H1 (cell line): ENCODE measurements at regions of chr2 and their contacts with region 1.

Region 1: DNA sequence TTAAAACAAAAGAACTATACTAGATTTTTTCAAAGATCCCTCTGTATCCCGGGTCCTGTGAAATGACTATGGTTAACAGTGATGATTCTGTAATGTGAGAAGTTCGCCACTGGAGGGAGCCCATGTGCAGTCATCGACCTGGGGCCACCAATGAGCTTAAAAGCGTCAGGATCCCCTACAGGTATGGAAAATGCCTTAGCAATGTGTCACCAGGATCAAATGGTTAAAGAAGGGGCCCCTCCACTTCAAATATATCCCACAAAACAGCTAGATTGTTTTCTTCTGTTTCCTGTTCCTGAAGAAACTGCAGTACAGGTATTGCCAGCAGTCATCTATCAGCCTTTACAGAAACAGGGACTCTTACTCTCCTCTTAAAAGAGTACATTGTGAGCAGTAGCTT is 15.3 kb downstream of the CHRNA1 start:
- DNase-seq: peak; percentile 66 to 89
- H3K4me3 ChIP-seq: no peak overlapping the region; a peak in 1 of 8 replicates
- H3K27ac ChIP-seq: no peak overlapping the region
- H3K4me1 ChIP-seq: peaks cover 0 to 2% (median 1%) of the 10 kb centered on the region in 4 experiments; a peak in 3 of 7 replicates
- H3K27me3 ChIP-seq: no peaks in the 10 kb centered on the region
- CTCF ChIP-seq: peak; percentile 67 to 89 (median 82)
- EP300 ChIP-seq: no peak
- POLR2A ChIP-seq: no peak
- RAD21 ChIP-seq: peak; percentile 96 to 97

Region 2: DNA sequence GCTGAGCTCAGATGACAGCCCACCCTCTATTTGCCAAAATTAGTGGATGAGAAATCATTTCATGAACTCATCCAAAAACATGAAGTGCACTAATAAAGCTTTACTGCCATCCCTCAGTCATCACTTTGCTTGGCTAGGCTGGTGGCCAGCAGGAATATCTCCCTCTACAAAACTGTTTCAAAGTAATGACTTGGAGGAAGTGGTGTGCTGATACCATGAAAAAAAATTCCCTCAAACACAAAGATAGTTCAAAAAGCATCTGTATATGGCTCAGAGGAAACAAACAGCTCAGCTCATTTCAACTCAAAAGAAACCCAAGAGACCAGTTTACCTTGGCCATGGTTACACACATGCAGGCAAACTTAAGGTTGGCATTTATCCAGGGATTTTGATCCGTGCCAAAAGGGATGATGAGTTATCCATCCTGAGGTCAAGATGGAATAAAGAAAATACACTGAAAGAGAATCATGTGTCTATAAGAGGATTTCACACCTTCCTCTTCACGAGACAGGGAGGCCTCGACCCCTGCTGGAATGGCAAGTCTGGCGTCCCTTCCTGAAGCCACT is 133.0 kb before region 1 on chr2:
- CTCF ChIA-PET with region 1: no interaction called
- POLR2A ChIA-PET with region 1: no interaction called
- DNase-seq: no peak
- H3K4me3 ChIP-seq: no peak overlapping the region
- H3K27ac ChIP-seq: no peak overlapping the region
- H3K4me1 ChIP-seq: no peaks in the 10 kb centered on the region
- H3K27me3 ChIP-seq: no peaks in the 10 kb centered on the region
- CTCF ChIP-seq: no peak
- EP300 ChIP-seq: no peak
- POLR2A ChIP-seq: no peak
- RAD21 ChIP-seq: no peak

Region 3: DNA sequence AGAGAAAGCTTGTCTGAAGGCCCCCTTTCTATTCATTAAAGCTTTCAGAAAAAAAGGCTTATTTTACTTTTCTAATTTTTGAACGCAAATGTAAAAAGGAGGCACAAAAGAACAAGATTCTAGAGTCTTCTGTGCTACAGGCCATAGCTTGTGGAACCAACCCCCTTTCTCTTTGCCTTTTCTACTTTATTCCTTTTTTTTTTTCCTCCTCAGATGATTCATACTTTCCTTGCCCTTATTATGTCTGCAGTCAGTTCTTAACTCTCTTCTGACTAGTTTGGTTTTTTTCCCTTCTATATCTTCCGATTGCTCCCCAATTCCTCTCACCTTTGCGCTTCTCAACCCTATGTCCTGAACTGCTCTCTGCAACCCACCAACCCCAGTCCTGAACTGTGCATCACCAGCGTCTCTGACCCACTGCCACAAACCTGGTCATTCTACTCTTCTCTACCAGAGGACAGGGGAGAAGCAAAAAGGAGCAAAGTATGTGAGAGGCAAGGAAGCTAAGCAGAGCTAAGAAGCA is 94.5 kb before region 1 on chr2:
- CTCF ChIA-PET with region 1: no interaction called
- POLR2A ChIA-PET with region 1: no interaction called
- DNase-seq: no peak
- H3K4me3 ChIP-seq: no peak overlapping the region
- H3K27ac ChIP-seq: no peak overlapping the region
- H3K4me1 ChIP-seq: no peaks in the 10 kb centered on the region
- H3K27me3 ChIP-seq: no peaks in the 10 kb centered on the region
- CTCF ChIP-seq: no peak
- EP300 ChIP-seq: no peak
- POLR2A ChIP-seq: no peak
- RAD21 ChIP-seq: no peak

Region 4: GRCh38 chr2:174682578-174683391 is 66.2 kb before region 1 on chr2:
- CTCF ChIA-PET with region 1: no interaction called
- POLR2A ChIA-PET with region 1: no interaction called
- DNase-seq: peak in 1 of 2 experiments; percentile 81
- H3K4me3 ChIP-seq: peak overlapping the region; percentile 58 to 76 (median 63)
- H3K27ac ChIP-seq: no peak overlapping the region
- H3K4me1 ChIP-seq: peaks cover 2 to 6% (median 2%) of the 10 kb centered on the region in 4 experiments; a peak in 5 of 7 replicates
- H3K27me3 ChIP-seq: peaks cover 5 to 29% (median 23%) of the 10 kb centered on the region in 4 experiments
- CTCF ChIP-seq: no peak
- EP300 ChIP-seq: no peak
- POLR2A ChIP-seq: no peak
- RAD21 ChIP-seq: no peak

Region 5: GRCh38 chr2:174729797-174730697 is 18.9 kb before region 1 on chr2:
- CTCF ChIA-PET with region 1: interaction called, 14 read pairs
- POLR2A ChIA-PET with region 1: interaction called, 3 read pairs
- DNase-seq: peak; percentile 29 to 59
- H3K4me3 ChIP-seq: peak overlapping the region; percentile 40 to 66 (median 50)
- H3K27ac ChIP-seq: no peak overlapping the region
- H3K4me1 ChIP-seq: peaks cover 0 to 1% (median 0%) of the 10 kb centered on the region in 4 experiments; a peak in 3 of 7 replicates
- H3K27me3 ChIP-seq: peaks cover 0 to 20% (median 9%) of the 10 kb centered on the region in 4 experiments; a peak in 5 of 7 replicates
- CTCF ChIP-seq: 0 out of 4 replicates have a peak, but pooled peaks of 1 of the 3 experiments have one; percentile 11
- EP300 ChIP-seq: no peak
- POLR2A ChIP-seq: no peak
- RAD21 ChIP-seq: no peak

Region 6: GRCh38 chr2:174759381-174760065 is 10.6 kb after region 1 on chr2:
- CTCF ChIA-PET with region 1: interaction called, 52 read pairs
- POLR2A ChIA-PET with region 1: interaction called, 3 read pairs
- DNase-seq: no peak
- H3K4me3 ChIP-seq: no peak overlapping the region
- H3K27ac ChIP-seq: no peak overlapping the region
- H3K4me1 ChIP-seq: peaks cover 0 to 5% (median 0%) of the 10 kb centered on the region in 4 experiments; a peak in 1 of 7 replicates
- H3K27me3 ChIP-seq: no peaks in the 10 kb centered on the region; a peak in 1 of 7 replicates
- CTCF ChIP-seq: no peak
- EP300 ChIP-seq: no peak
- POLR2A ChIP-seq: no peak
- RAD21 ChIP-seq: no peak

Region 7: GRCh38 chr2:174764280-174765255 is 15.6 kb after region 1 on chr2 and contains the start of gene CHRNA1:
- CTCF ChIA-PET with region 1: interaction called, 52 read pairs
- POLR2A ChIA-PET with region 1: interaction called, 3 read pairs
- DNase-seq: no peak
- H3K4me3 ChIP-seq: no peak within 1 kb of the TSS
- H3K27ac ChIP-seq: no peak within 1 kb of the TSS
- H3K4me1 ChIP-seq: peaks cover 0 to 7% (median under 1%) of the 10 kb centered on the region in 4 experiments; a peak in 5 of 7 replicates
- H3K27me3 ChIP-seq: no peaks in the 10 kb centered on the region; a peak in 1 of 7 replicates
- CTCF ChIP-seq: no peak
- EP300 ChIP-seq: no peak
- POLR2A ChIP-seq: no peak
- RAD21 ChIP-seq: no peak
- total RNA-seq, gene CHRNA1: 0.15 TPM in 1 of 2 replicates, not detected in the other

Region 8: DNA sequence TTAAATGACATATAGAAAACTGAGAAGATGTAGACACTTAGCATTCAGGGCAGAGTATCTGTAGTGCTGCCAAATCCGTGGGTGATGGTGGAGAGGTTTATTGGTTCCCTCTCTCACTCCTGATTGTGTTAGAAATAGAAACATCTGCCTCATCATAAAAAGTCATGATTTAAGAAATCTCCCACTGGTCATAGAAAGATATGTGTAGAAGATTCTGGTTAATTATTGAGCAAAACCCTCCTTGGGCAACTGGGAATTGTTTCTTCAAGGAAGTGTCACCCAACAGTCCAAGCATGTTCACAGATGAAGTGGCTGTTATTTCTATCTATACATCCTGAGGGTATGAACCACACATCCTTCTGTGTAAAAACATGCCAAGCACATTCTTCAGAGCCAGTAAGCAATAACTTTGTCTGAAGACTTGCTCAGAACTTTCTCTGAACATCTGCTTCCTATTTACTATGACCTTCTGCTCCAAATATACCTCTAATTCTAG is 48.9 kb after region 1 on chr2:
- CTCF ChIA-PET with region 1: interaction called, 10 read pairs
- POLR2A ChIA-PET with region 1: no interaction called
- DNase-seq: no peak
- H3K4me3 ChIP-seq: no peak overlapping the region
- H3K27ac ChIP-seq: 0 out of 2 replicates have a peak overlapping the region, but pooled peaks have one; percentile 4
- H3K4me1 ChIP-seq: peaks cover 6 to 22% (median 13%) of the 10 kb centered on the region in 4 experiments; a peak in 5 of 7 replicates
- H3K27me3 ChIP-seq: peaks cover 0 to 1% (median 0%) of the 10 kb centered on the region in 4 experiments; a peak in 1 of 7 replicates
- CTCF ChIP-seq: no peak
- EP300 ChIP-seq: no peak
- POLR2A ChIP-seq: 0 out of 3 replicates have a peak, but pooled peaks of 1 of the 2 experiments have one; percentile 28
- RAD21 ChIP-seq: no peak

Region 9: GRCh38 chr2:174985630-174986029 is 236.7 kb after region 1 on chr2:
- CTCF ChIA-PET with region 1: interaction called, 47 read pairs
- POLR2A ChIA-PET with region 1: interaction called, 3 read pairs
- DNase-seq: no peak
- H3K4me3 ChIP-seq: no peak overlapping the region
- H3K27ac ChIP-seq: no peak overlapping the region
- H3K4me1 ChIP-seq: no peaks in the 10 kb centered on the region; a peak in 2 of 7 replicates
- H3K27me3 ChIP-seq: no peaks in the 10 kb centered on the region
- CTCF ChIP-seq: peak in 2 of 3 experiments; percentile 37 to 40; a peak in 2 of 4 replicates
- EP300 ChIP-seq: no peak
- POLR2A ChIP-seq: no peak
- RAD21 ChIP-seq: peak; percentile 54 to 68